Ascending aorta (tissue), 2 donors: ENCODE measurements at regions of chr2 and their contacts with region 1.

Region 1: GRCh38 chr2:11688222-11689069 is 18.5 kb upstream of the NTSR2 start:
- DNase-seq: peak; percentile 46 to 91
- H3K4me3 ChIP-seq: peak overlapping the region; percentile 32 to 47
- H3K27ac ChIP-seq: peak overlapping the region; percentile 57 to 70
- H3K4me1 ChIP-seq: peaks cover 0 to 17% of the 10 kb centered on the region in 2 donors
- H3K27me3 ChIP-seq: no peaks in the 10 kb centered on the region
- CTCF ChIP-seq: peak; percentile 74 to 95 (median 76)

Region 2: DNA sequence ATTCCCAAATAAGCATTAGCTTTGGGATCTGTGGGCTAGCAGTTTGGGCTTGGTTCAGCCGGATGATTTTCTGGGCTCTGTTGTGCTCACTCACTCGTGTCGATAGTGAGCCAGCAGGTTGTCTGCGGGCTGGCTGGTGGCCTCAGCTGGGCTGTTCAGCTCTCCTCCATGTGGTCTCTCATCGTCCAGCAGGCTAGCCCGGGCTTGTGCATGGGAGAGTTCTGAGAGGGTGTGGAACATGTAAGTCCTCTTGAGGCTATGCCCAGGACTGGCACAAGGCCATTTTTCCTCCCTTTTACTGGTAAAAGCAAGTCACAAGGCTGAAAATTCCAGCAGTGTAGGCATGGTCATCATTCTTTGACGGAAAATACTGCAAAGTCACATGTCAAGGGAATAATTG is 57.0 kb before region 1 on chr2:
- intact Hi-C with region 1: no loop called
- DNase-seq: peak in 1 of 2 donors; percentile 52
- H3K4me3 ChIP-seq: no peak overlapping the region
- H3K27ac ChIP-seq: no peak overlapping the region
- H3K4me1 ChIP-seq: no peaks in the 10 kb centered on the region
- H3K27me3 ChIP-seq: no peaks in the 10 kb centered on the region
- CTCF ChIP-seq: no peak

Region 3: DNA sequence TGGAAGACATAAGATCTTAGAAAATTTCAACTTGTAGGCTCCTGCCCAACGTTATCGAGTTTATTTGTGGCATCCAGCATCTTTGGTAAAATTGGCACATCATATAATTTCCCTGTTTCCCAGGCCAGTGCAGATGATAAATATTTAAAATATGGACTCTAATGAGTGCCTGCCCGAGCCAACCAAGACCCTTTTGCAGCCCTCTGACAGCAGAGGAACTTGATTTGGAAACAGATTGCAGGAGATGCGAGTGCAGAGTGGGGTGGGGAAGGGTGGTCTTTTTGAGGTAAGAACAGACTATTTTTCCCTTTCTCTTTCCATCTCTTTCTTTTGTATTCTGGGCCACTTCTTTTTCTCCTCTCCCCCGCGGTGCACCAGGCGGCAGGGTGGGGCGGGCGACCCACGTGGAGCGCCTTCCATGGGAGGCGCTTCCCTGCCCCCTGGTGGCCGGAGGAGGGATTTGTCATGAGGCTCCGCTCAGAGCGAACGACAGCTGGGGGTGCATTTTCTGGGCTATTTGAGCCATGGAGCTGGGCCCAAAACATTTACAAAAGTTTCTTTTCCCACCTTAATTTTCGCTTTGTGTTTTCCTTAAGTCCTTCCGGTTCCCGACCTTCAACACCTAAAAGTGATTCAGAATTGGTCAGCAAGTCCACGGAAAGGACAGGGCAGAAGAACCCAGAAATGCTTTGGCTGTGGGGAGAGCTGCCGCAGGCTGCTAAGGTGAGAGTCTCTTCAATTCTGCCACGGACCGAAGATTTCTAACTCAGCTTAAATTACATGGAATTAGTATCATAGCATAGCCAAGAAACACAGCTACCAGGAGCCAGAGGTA is 90.7 kb after region 1 on chr2:
- intact Hi-C with region 1: loop called (anchors 1 kb)
- DNase-seq: peak in 1 of 2 donors; percentile 79
- H3K4me3 ChIP-seq: no peak overlapping the region
- H3K27ac ChIP-seq: no peak overlapping the region
- H3K4me1 ChIP-seq: peaks cover 3 to 4% of the 10 kb centered on the region in 2 donors
- H3K27me3 ChIP-seq: no peaks in the 10 kb centered on the region
- CTCF ChIP-seq: peak; percentile 94 to 99 (median 94)